ENCODE measurements at regions of chr7 and their contacts with region 1.

Region 1: DNA sequence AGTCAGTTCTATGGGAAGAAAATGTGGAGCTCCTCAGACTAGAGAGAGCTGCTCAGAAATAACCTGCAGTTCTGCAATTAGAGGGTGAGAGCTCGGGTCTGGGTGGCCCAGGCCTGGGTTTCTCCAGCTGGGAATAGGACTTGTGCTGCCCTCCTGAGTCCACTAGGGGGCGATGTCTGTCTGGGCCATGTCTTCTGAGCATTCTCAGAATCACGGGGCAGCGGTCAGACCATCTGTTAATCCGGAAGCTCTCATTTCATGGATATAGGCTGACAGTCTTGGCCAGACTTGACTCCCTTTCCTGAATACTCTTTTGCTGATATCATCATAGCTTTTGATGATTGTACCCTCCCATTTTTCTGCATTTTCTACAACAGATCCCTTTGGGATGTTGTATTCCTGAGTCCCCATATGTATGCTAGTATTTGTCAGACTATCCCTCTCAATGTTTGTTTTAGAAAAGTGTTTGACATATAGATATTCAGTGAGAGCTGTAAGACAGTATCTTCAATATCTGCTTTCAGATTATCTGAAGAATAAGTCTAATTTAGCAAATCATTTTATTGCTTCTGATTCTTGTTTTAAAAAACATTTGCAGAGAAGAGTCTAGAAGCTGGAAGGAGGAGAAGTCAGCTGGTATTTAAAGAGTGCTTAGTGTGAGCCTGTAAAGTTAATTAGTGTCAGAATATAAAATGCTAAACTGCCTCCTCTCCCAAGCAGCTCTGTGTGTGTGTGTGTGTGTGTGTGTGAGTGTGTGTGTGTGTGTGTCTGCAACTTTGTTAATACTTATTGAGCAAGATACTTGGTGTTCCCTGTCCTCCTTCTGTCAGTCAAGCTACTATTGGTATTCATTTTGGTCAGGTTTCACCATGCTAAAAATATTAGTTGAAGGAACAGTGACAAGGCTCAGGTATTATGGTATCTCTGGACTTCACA is 38.0 kb downstream of the STARD3NL start:
- DNase-seq: peak; percentile 85
- H3K4me3 Mint-ChIP-seq: no peak overlapping the region
- H3K27ac Mint-ChIP-seq: no peak overlapping the region
- H3K4me1 Mint-ChIP-seq: peaks cover 43% of the 10 kb centered on the region
- H3K27me3 Mint-ChIP-seq: no peaks in the 10 kb centered on the region

Region 2: GRCh38 chr7:38160003-38160571 is 55.9 kb before region 1 on chr7:
- CTCF ChIA-PET with region 1: no interaction called
- POLR2A ChIA-PET with region 1: no interaction called
- intact Hi-C with region 1: no loop called
- DNase-seq: no peak
- H3K4me3 Mint-ChIP-seq: no peak overlapping the region
- H3K27ac Mint-ChIP-seq: no peak overlapping the region
- H3K4me1 Mint-ChIP-seq: no peaks in the 10 kb centered on the region
- H3K27me3 Mint-ChIP-seq: peaks cover 13% of the 10 kb centered on the region

Region 3: GRCh38 chr7:38178004-38178694 is 37.9 kb before region 1 on chr7 and contains the start of gene STARD3NL:
- CTCF ChIA-PET with region 1: interaction called, 31 read pairs
- POLR2A ChIA-PET with region 1: interaction called, 3 read pairs
- intact Hi-C with region 1: loop called (anchors 1 kb)
- DNase-seq: peak; percentile 92
- H3K4me3 Mint-ChIP-seq: peak within 1 kb of the TSS; percentile 96
- H3K27ac Mint-ChIP-seq: peak within 1 kb of the TSS; percentile 90
- H3K4me1 Mint-ChIP-seq: peaks cover 32% of the 10 kb centered on the region
- H3K27me3 Mint-ChIP-seq: peaks cover 9% of the 10 kb centered on the region
- total RNA-seq, gene STARD3NL: 34.4 to 34.7 TPM

Region 4: DNA sequence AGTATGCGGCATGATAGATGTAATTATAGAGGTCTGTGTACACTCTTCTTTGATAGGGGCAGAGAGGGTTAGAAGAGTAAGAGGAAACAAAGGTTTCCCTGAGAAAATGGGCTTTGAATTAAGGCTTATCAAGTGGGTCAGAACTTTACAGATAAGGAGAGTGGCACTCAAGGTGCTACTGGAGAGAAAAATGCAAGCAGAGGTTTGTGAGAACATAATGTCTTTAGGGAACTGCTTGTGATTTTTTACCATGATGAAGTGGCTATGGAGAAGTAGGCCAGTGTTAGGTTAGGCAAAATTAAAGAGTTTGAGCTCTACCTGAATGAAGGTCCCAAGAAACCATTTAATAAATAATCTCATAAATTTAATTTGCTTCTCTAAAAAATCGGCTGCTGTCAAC is 23.7 kb before region 1 on chr7:
- CTCF ChIA-PET with region 1: interaction called, 56 read pairs
- POLR2A ChIA-PET with region 1: no interaction called
- intact Hi-C with region 1: no loop called
- DNase-seq: no peak
- H3K4me3 Mint-ChIP-seq: no peak overlapping the region
- H3K27ac Mint-ChIP-seq: no peak overlapping the region
- H3K4me1 Mint-ChIP-seq: peaks cover 37% of the 10 kb centered on the region
- H3K27me3 Mint-ChIP-seq: no peaks in the 10 kb centered on the region

Region 5: DNA sequence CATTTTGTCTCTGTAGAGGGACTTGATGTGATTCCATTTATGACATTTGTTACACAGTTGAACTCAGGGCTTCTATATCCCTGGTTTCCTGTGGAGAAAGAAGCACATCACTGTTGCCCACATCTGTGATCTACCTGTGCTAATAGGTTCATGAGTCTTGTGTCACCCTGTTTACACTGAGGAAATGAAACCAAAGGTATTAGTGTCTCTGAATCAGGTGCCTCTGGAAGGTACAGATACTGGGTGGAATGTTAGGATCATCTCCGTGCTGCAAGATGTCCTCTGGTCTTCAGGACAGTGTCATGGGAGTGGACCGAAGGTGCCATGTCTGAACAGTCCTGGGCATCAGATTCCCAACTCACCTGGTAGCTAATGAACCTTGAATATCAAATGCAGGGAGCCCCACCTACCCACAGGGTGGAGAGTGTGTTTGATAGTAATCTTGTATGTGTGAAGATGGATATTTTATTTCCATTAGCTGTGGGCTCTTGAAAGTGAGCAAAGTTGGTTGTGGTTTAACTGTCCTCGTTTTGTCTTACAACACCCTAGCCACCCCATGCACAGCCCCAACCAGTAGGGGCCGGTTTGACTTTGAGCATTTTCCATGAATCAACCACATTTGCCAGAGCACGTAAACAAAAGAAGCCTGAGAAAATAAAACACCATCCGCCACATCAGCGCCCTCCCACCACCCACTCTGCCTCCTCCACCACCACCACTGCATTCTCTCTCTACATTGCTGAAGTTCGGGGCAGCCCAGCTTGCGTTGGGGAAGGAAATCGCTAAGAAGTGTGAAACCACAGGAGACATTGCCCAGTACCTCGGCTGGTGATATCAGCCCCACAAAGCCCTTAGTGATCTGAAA is 16.7 kb after region 1 on chr7:
- CTCF ChIA-PET with region 1: interaction called, 19 read pairs
- POLR2A ChIA-PET with region 1: no interaction called
- intact Hi-C with region 1: loop called (anchors 1 kb)
- DNase-seq: peak; percentile 88
- H3K4me3 Mint-ChIP-seq: peak overlapping the region; percentile 44
- H3K27ac Mint-ChIP-seq: peak overlapping the region; percentile 77
- H3K4me1 Mint-ChIP-seq: peaks cover 44% of the 10 kb centered on the region
- H3K27me3 Mint-ChIP-seq: no peaks in the 10 kb centered on the region

Region 6: DNA sequence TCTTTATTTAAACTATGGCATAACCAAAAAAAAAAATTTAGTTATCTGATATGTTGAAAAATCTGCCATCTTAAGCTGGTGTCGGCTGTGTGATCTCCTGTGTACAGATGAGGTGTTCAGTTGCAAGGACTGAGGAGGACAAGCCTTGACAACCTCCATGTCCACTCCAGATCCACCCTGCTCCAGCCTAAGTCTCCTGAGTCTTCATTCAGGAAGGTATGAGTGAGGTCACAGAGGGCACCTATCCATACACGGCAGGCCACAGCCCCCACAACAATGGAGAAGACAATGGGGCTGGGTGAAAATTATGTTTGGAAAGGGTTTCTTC is 41.3 kb after region 1 on chr7:
- CTCF ChIA-PET with region 1: no interaction called
- POLR2A ChIA-PET with region 1: no interaction called
- intact Hi-C with region 1: no loop called
- DNase-seq: no peak
- H3K4me3 Mint-ChIP-seq: no peak overlapping the region
- H3K27ac Mint-ChIP-seq: no peak overlapping the region
- H3K4me1 Mint-ChIP-seq: no peaks in the 10 kb centered on the region
- H3K27me3 Mint-ChIP-seq: no peaks in the 10 kb centered on the region

Region 7: GRCh38 chr7:38280000-38280399 is 64.0 kb after region 1 on chr7:
- CTCF ChIA-PET with region 1: no interaction called
- POLR2A ChIA-PET with region 1: no interaction called
- intact Hi-C with region 1: no loop called
- DNase-seq: no peak
- H3K4me3 Mint-ChIP-seq: no peak overlapping the region
- H3K27ac Mint-ChIP-seq: no peak overlapping the region
- H3K4me1 Mint-ChIP-seq: no peaks in the 10 kb centered on the region
- H3K27me3 Mint-ChIP-seq: no peaks in the 10 kb centered on the region

Region 8: DNA sequence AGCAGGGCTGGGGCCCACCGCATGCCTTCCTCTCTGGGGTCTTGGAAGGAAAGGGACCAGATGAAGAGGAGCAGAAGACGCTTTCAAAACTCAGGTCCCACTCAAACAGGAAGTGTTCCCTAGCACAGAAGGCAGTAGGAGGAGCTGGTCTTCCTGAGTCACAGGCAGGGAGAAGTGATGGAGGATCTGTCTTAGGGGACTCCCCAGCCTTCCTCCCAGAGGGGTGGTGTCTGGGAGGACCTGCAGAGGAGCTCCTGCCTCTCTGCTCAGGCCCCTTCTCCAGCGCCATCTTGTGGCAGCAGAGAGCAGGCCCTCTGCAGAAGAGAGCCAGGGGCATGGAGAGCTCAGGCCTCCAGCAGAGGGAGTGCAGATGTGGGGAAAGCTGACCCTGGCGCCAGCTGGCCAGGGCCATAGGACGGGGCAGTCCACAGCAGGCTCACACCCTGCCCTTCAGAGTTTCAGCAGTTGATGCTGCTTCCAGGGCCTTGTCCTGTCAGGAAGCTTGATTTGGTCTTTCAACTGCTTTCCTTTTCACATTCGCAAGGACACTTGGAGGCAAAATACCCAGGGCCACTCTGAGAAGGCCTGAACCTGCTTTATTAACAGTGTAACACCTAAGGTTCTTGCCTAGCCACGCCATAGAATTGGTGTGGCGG is 119.6 kb after region 1 on chr7:
- CTCF ChIA-PET with region 1: interaction called, 158 read pairs
- POLR2A ChIA-PET with region 1: interaction called, 3 read pairs
- intact Hi-C with region 1: loop called (anchors 1 kb)
- DNase-seq: peak; percentile 89
- H3K4me3 Mint-ChIP-seq: peak overlapping the region; percentile 69
- H3K27ac Mint-ChIP-seq: peak overlapping the region; percentile 83
- H3K4me1 Mint-ChIP-seq: peaks cover 39% of the 10 kb centered on the region
- H3K27me3 Mint-ChIP-seq: no peaks in the 10 kb centered on the region

Region 9: DNA sequence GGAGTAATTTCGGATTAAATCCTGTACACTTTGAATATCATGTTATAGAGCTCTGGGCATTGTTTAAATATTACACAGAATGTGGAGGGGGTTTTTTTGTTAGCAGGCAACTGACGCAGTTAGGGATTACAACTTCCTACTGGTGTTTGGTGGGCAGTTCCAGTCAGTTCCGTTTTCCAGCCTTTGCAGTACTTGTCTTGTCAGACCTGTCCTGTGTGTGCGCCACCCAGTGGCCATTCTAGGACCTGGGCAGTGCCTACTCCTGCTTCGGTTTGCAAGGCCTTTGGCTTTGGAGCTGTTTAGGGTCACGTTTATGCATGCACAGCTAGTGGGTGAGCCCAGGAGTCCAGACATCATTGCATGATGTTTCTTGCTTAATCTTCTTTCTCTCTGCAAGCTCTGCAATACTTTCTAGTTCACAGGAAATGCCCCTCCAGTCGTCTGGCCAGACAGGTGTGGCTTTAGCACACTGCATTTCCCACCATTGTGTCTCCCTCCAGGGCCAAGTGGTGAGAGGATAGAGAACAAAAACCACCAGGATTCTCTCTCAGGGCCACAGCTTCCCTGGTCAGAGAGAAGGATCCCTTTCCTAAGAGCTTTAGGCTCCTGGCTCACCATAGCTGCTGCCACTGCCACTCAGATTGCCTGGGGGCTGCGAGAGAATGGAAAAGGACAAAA is 154.0 kb after region 1 on chr7:
- CTCF ChIA-PET with region 1: interaction called, 233 read pairs
- POLR2A ChIA-PET with region 1: interaction called, 3 read pairs
- intact Hi-C with region 1: loop called (anchors 1 kb)
- DNase-seq: peak; percentile 84
- H3K4me3 Mint-ChIP-seq: no peak overlapping the region
- H3K27ac Mint-ChIP-seq: peak overlapping the region; percentile 29
- H3K4me1 Mint-ChIP-seq: peaks cover 56% of the 10 kb centered on the region
- H3K27me3 Mint-ChIP-seq: no peaks in the 10 kb centered on the region

Region 10: DNA sequence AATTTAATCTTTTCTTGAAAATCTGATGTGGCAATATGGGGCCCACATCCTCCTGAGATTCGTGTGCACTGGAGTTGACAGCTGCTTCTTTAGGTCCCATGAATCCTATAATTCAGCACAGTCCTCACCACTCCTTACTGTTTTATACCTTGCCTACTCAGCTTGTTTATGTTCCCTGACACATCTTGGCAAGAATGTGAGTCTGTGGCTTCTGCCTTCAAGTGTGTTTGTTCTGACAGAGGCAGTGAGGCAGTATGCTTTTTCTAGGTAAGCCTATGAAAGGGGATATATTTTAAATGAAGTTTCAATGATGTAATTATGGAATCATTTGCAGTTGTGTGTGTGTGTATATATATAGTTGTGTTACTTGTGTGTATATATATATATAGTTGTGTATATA is 308.8 kb after region 1 on chr7:
- CTCF ChIA-PET with region 1: no interaction called
- POLR2A ChIA-PET with region 1: no interaction called
- intact Hi-C with region 1: no loop called
- DNase-seq: no peak
- H3K4me3 Mint-ChIP-seq: no peak overlapping the region
- H3K27ac Mint-ChIP-seq: no peak overlapping the region
- H3K4me1 Mint-ChIP-seq: no peaks in the 10 kb centered on the region
- H3K27me3 Mint-ChIP-seq: peaks cover 3% of the 10 kb centered on the region